A549 (cell line): ENCODE measurements at regions of chr19 and their contacts with region 1.

Region 1: DNA sequence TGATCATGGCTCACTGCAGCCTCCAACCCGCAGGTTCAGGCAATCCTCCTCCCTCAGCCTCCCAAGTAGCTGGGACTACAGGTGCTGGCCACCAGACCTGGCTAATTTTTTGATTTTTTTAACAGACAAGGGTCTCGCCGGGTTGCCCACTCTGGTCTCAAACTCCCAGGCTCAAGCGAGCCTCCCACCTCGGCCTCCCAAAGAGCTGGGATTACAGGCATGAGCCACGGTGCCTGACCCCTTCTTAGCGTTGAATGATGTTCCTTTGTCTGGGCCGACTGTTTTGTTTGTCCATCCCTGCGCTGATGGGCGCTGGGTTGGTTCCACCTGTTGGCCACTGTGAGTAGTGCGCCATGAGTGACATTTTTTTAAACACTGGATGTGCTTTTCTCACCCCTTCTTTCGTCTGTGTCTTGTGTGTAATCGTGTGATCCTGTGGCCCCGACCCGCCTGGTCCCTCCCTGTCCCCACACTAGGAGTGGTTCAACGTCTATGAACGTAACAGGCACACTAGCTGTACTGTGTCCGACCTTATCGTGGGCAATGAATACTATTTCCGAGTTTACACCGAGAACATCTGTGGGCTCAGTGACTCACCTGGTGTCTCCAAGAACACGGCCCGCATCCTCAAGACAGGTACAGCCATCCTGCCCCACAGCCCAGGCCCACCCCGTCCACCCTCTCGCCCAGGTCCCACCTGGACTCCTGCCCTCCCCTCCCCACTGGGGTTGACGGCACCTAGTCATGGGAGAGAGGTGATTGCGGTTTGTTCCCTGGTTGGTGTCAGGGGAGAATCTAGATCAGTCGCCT is 15.0 kb upstream of the EMC10 start:
- DNase-seq: peak; percentile 87 to 99
- ATAC-seq: peak; percentile 80 to 87
- H3K4me3 ChIP-seq: no peak overlapping the region
- H3K27ac ChIP-seq: peak overlapping the region; percentile 41 to 74
- H3K4me1 ChIP-seq: peaks cover 16% of the 10 kb centered on the region
- CTCF ChIP-seq: peak; percentile 88
- EP300 ChIP-seq: no peak
- POLR2A ChIP-seq: no peak
- RAD21 ChIP-seq: peak; percentile 85 to 92

Region 2: GRCh38 chr19:50349277-50350057 is 111.8 kb before region 1 on chr19:
- CTCF ChIA-PET with region 1: interaction called, 35 read pairs
- POLR2A ChIA-PET with region 1: no interaction called
- DNase-seq: no peak
- ATAC-seq: no peak
- H3K4me3 ChIP-seq: no peak overlapping the region
- H3K27ac ChIP-seq: no peak overlapping the region
- H3K4me1 ChIP-seq: no peaks in the 10 kb centered on the region
- CTCF ChIP-seq: no peak
- EP300 ChIP-seq: no peak
- POLR2A ChIP-seq: no peak
- RAD21 ChIP-seq: no peak

Region 3: DNA sequence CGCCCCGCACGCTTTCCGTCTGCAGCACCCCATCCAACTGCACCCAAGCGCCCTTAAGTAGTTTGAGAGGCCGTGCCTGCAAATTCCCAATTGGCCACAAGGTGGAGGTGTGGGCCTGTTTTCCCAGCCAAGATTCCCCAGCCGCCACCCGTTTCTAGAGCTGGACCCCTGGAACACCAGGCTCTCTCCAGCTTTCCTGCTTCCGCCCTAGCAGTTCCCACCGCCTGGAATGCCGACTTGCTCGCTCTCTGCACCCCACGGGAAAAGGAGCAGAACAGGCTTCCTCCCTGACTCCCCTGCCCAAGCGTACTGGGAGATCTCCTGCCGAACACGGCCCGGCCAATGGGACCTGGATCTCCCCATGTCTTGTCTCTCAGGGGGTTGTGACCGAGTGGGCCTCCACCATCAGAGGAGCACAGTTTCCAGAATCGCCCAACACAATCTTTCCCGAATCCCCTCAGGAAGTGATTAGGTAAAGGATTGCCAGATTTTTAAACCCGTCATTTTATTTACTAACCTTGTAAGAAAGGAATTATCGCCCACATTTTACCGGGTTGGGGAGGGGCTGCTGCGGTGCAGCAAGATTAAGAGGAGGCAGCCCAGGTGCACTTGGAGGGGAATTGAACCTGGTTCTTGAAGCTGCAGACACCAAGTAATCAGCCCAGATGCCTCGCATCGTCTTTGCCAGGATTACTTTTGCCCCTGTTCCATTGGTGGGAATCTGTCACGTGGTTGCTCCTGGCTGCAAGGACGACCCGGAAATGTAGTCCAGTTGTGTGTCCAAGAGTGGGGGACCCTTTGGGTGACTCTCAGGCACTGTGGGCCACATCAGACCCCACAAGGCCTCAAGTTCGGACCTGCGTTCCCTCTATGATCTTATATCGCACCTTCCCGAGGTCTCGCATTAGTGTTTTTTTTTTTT is 92.4 kb before region 1 on chr19:
- CTCF ChIA-PET with region 1: interaction called, 175 read pairs
- POLR2A ChIA-PET with region 1: interaction called, 6 read pairs
- DNase-seq: peak; percentile 95 to 99
- ATAC-seq: peak; percentile 95
- H3K4me3 ChIP-seq: peak overlapping the region; percentile 62
- H3K27ac ChIP-seq: peak overlapping the region; percentile 85 to 87
- H3K4me1 ChIP-seq: peaks cover 5% of the 10 kb centered on the region
- CTCF ChIP-seq: peak; percentile 94
- EP300 ChIP-seq: no peak
- POLR2A ChIP-seq: peak; percentile 79
- RAD21 ChIP-seq: peak; percentile 95

Region 4: GRCh38 chr19:50383852-50384684 is 77.2 kb before region 1 on chr19 and contains the start of gene POLD1:
- CTCF ChIA-PET with region 1: interaction called, 13 read pairs
- POLR2A ChIA-PET with region 1: interaction called, 6 read pairs
- DNase-seq: peak; percentile 99
- ATAC-seq: peak; percentile 68 to 88
- H3K4me3 ChIP-seq: peak within 1 kb of the TSS; percentile 67
- H3K27ac ChIP-seq: peak within 1 kb of the TSS; percentile 80 to 93
- H3K4me1 ChIP-seq: peaks cover 15% of the 10 kb centered on the region
- CTCF ChIP-seq: no peak
- EP300 ChIP-seq: no peak
- POLR2A ChIP-seq: peak; percentile 82
- RAD21 ChIP-seq: no peak
- polyA plus RNA-seq, gene POLD1: 24.2 and 26.1 TPM in 2 replicates

Region 5: GRCh38 chr19:50423295-50424113 is 37.8 kb before region 1 on chr19:
- CTCF ChIA-PET with region 1: interaction called, 36 read pairs
- POLR2A ChIA-PET with region 1: no interaction called
- DNase-seq: no peak
- ATAC-seq: no peak
- H3K4me3 ChIP-seq: no peak overlapping the region
- H3K27ac ChIP-seq: no peak overlapping the region
- H3K4me1 ChIP-seq: no peaks in the 10 kb centered on the region
- CTCF ChIP-seq: no peak
- EP300 ChIP-seq: no peak
- POLR2A ChIP-seq: no peak
- RAD21 ChIP-seq: no peak

Region 6: DNA sequence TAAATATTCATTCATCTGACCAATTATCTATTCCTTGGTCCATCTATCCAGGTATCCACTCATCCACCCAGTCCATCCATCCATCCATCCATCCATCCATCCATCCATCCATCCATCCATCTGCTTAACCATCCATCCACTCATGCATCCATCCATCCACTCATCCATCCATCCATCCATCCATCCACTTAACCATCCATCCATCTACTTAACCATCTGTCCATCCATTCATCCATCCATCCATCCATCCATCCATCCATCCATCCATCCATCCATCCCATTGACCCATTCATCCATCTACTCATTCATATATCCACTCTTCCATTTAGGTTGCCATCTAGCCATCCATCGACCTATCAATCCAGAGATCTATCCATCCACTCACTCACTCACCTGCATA is 17.2 kb before region 1 on chr19:
- CTCF ChIA-PET with region 1: interaction called, 25 read pairs
- POLR2A ChIA-PET with region 1: no interaction called
- DNase-seq: no peak
- ATAC-seq: no peak
- H3K4me3 ChIP-seq: no peak overlapping the region
- H3K27ac ChIP-seq: no peak overlapping the region
- H3K4me1 ChIP-seq: no peaks in the 10 kb centered on the region
- CTCF ChIP-seq: no peak
- EP300 ChIP-seq: no peak
- POLR2A ChIP-seq: no peak
- RAD21 ChIP-seq: no peak

Region 7: GRCh38 chr19:50476224-50476942 is 15.1 kb after region 1 on chr19 and contains the starts of genes EMC10 and GARIN5A:
- CTCF ChIA-PET with region 1: interaction called, 28 read pairs
- POLR2A ChIA-PET with region 1: no interaction called
- DNase-seq: peak; percentile 99
- ATAC-seq: peak; percentile 73 to 91
- H3K4me3 ChIP-seq: peak within 1 kb of the TSS; percentile 86
- H3K27ac ChIP-seq: peak within 1 kb of the TSS; percentile 87 to 93
- H3K4me1 ChIP-seq: peaks cover 12% of the 10 kb centered on the region
- CTCF ChIP-seq: no peak
- EP300 ChIP-seq: no peak
- POLR2A ChIP-seq: peak; percentile 96
- RAD21 ChIP-seq: no peak
- polyA plus RNA-seq, gene EMC10: 52.8 and 54.0 TPM in 2 replicates
- polyA plus RNA-seq, gene GARIN5A: 0.57 and 1.1 TPM in 2 replicates

Region 8: DNA sequence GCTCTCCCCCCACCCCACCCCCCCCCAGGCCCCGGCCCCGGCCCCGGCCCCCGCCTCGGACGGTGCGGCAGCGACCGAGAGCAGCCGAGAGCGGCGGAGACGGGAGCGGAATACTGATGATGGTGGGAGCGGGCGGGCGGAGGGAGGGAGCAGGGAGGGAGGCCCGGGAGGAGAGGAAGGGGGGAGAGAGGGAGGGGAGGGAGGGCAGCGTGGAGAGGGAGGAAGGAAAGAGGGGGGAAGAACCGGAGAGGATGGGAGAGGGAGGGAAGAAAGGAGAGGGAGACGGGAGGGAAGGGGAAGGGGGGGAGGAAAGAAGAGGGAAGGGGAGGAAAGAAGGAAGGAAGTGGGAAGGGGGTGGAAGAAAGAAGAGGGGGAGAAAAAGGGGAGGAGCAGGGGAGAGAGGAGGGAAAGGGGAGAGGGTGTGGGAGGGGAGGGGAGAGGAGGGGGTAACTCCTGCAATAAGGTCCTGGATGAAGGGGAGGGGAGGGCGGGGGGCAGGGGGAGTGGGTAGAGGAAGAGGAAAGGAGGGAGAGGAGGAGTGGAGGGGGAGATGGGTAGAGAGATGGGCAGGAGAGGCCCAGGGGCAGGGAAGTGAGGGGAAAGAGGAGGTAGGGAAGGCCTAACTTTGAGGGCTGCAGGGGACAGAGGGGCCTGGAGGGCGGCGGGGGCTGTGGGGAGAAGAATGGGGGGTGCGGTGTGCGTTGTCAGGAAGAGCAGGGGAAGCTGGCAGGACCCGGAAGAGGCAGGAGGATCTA is 107.2 kb after region 1 on chr19 and contains the start of gene LRRC4B:
- CTCF ChIA-PET with region 1: no interaction called
- POLR2A ChIA-PET with region 1: no interaction called
- DNase-seq: no peak
- ATAC-seq: no peak
- H3K4me3 ChIP-seq: peak within 1 kb of the TSS; percentile 55
- H3K27ac ChIP-seq: peak within 1 kb of the TSS; percentile 63 to 81; a peak in 5 of 6 replicates
- H3K4me1 ChIP-seq: peaks cover 19% of the 10 kb centered on the region
- CTCF ChIP-seq: no peak
- EP300 ChIP-seq: no peak
- POLR2A ChIP-seq: no peak
- RAD21 ChIP-seq: no peak
- polyA plus RNA-seq, gene LRRC4B: 0.49 and 0.54 TPM in 2 replicates

Region 9: GRCh38 chr19:50607874-50608785 is 146.9 kb after region 1 on chr19:
- CTCF ChIA-PET with region 1: no interaction called
- POLR2A ChIA-PET with region 1: no interaction called
- DNase-seq: peak; percentile 97 to 99
- ATAC-seq: peak; percentile 86 to 90
- H3K4me3 ChIP-seq: peak overlapping the region; percentile 28
- H3K27ac ChIP-seq: peak overlapping the region in 1 of 2 experiments; percentile 37; a peak in 3 of 6 replicates
- H3K4me1 ChIP-seq: peaks cover 5% of the 10 kb centered on the region; the same call in 1 of the 3 replicates
- CTCF ChIP-seq: peak; percentile 82
- EP300 ChIP-seq: no peak
- POLR2A ChIP-seq: no peak
- RAD21 ChIP-seq: peak; percentile 80 to 82